Activated CD4-positive, alpha-beta memory T cell treated with anti-CD3 and anti-CD28 coated beads, Interleukin-2, amount 10 ng/mL, durations not matched to agents 7 days and 5 days (primary cell): ENCODE measurements at regions of chr10 and their contacts with region 1.

Region 1: GRCh38 chr10:110584006-110584405 is 16.5 kb downstream of the SMC3 start:
- DNase-seq: no peak
- H3K4me3 Mint-ChIP-seq: no peak overlapping the region
- H3K27ac Mint-ChIP-seq: no peak overlapping the region
- H3K4me1 Mint-ChIP-seq: peaks cover 2% of the 10 kb centered on the region
- H3K27me3 Mint-ChIP-seq: no peaks in the 10 kb centered on the region

Region 2: GRCh38 chr10:110535958-110536891 is 47.8 kb before region 1 on chr10:
- CTCF ChIA-PET with region 1: no interaction called
- POLR2A ChIA-PET with region 1: no interaction called
- DNase-seq: peak; percentile 75
- H3K4me3 Mint-ChIP-seq: no peak overlapping the region
- H3K27ac Mint-ChIP-seq: peak overlapping the region; percentile 30
- H3K4me1 Mint-ChIP-seq: peaks cover 38% of the 10 kb centered on the region
- H3K27me3 Mint-ChIP-seq: peaks cover 6% of the 10 kb centered on the region

Region 3: GRCh38 chr10:110567201-110568054 is 16.6 kb before region 1 on chr10 and contains the start of gene SMC3:
- CTCF ChIA-PET with region 1: interaction called, 3 read pairs
- POLR2A ChIA-PET with region 1: interaction called, 13 read pairs
- DNase-seq: peak; percentile 92
- H3K4me3 Mint-ChIP-seq: peak within 1 kb of the TSS; percentile 95
- H3K27ac Mint-ChIP-seq: peak within 1 kb of the TSS; percentile 95
- H3K4me1 Mint-ChIP-seq: peaks cover 38% of the 10 kb centered on the region
- H3K27me3 Mint-ChIP-seq: peaks cover 1% of the 10 kb centered on the region
- total RNA-seq, gene SMC3: 81.0 to 83.0 TPM

Region 4: GRCh38 chr10:110600487-110601101 is 16.6 kb after region 1 on chr10:
- CTCF ChIA-PET with region 1: interaction called, 18 read pairs
- POLR2A ChIA-PET with region 1: interaction called, 3 read pairs
- DNase-seq: peak; percentile 37
- H3K4me3 Mint-ChIP-seq: no peak overlapping the region
- H3K27ac Mint-ChIP-seq: no peak overlapping the region
- H3K4me1 Mint-ChIP-seq: no peaks in the 10 kb centered on the region
- H3K27me3 Mint-ChIP-seq: no peaks in the 10 kb centered on the region

Region 5: GRCh38 chr10:110617425-110618229 is 33.6 kb after region 1 on chr10:
- CTCF ChIA-PET with region 1: no interaction called
- POLR2A ChIA-PET with region 1: no interaction called
- DNase-seq: no peak
- H3K4me3 Mint-ChIP-seq: no peak overlapping the region
- H3K27ac Mint-ChIP-seq: no peak overlapping the region
- H3K4me1 Mint-ChIP-seq: peaks cover 30% of the 10 kb centered on the region
- H3K27me3 Mint-ChIP-seq: peaks cover 7% of the 10 kb centered on the region

Region 6: DNA sequence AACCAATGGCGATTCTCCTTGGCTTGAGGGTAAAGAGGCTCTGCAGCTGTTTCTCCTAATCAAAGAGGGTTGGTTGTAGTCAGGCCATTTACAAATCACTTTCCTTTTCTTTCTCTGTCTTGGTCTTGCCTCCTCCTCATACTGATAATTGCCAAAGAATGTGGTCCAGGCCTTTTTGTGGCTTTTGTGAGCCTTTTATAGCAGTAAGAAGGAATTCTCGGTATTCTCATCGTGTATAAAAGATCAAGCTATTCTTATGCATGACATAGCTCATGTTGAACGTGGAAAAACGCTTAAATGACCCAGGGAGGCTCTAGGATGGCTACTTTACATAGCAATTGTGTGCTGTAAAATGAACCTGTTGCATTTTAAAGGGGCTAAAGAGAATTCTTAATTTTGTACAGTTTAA is 122.7 kb after region 1 on chr10:
- CTCF ChIA-PET with region 1: no interaction called
- POLR2A ChIA-PET with region 1: no interaction called
- DNase-seq: no peak
- H3K4me3 Mint-ChIP-seq: no peak overlapping the region
- H3K27ac Mint-ChIP-seq: no peak overlapping the region
- H3K4me1 Mint-ChIP-seq: no peaks in the 10 kb centered on the region
- H3K27me3 Mint-ChIP-seq: peaks cover 6% of the 10 kb centered on the region